Activated CD4-positive, alpha-beta T cell treated with anti-CD3 and anti-CD28 coated beads for 36 hours (primary cell): ENCODE measurements at regions of chr2 and their contacts with region 1.

Region 1: DNA sequence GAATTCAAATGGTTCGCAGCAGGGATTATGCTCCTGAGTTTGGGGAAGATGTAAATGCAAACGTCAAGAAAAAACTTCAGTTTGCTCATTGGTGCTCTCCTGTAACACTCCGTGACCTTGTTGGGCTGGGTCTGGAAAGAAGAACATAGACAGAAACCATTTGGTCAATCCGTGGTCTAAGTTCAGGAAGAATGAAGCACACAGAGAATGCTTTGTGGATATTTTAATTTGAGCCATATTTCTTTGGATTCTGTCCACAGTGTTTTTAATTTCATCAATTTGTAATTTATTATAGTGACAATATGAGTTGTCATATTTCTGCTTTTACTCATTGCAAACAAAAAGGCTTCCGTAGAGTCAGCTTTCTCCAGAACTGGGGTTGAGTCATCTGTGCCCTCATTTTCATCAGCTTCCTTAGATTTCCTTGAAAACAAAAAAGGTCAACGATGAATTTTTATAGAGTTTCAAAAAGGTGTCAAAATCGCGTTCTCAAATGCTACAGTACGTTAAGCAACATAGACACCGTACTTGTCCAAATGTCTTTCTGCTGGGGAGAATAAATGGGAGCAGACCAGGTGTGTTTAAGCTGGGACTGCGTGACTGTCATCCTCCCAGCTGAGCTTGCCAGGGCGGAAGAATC is 606.4 kb downstream of the RNF144A start:
- DNase-seq: peak; percentile 27
- ATAC-seq: peak; percentile 51
- H3K4me3 Mint-ChIP-seq: peak overlapping the region; percentile 46
- H3K27ac Mint-ChIP-seq: peak overlapping the region; percentile 92
- H3K4me1 Mint-ChIP-seq: peaks cover 57% of the 10 kb centered on the region
- H3K27me3 Mint-ChIP-seq: no peaks in the 10 kb centered on the region

Region 2: GRCh38 chr2:7450188-7450832 is 73.3 kb before region 1 on chr2:
- CTCF ChIA-PET with region 1: no interaction called
- POLR2A ChIA-PET with region 1: no interaction called
- intact Hi-C with region 1: loop called in 1 of 2 experiments (anchors 1 kb)
- DNase-seq: peak; percentile 83
- ATAC-seq: peak; percentile 84
- H3K4me3 Mint-ChIP-seq: peak overlapping the region; percentile 36
- H3K27ac Mint-ChIP-seq: peak overlapping the region; percentile 89
- H3K4me1 Mint-ChIP-seq: peaks cover 74% of the 10 kb centered on the region
- H3K27me3 Mint-ChIP-seq: no peaks in the 10 kb centered on the region

Region 3: DNA sequence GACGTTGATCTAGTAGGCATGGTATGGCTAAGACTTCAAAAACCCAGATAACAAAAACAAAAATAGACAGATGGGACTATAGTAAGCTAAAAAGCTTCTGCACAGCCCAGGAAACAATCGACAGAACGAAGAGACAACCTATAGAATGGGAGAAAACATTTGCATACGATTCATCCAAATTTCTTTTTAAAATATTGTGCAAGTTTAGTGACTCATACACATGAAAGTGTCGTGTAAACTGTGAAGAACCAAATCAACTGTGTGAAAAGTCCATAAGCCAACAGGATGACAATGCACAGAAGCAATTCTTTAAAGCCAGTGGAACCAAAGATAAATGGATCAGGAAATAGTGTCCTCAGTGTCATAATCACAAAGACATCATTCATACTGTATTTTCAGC is 64.7 kb after region 1 on chr2:
- CTCF ChIA-PET with region 1: no interaction called
- POLR2A ChIA-PET with region 1: no interaction called
- intact Hi-C with region 1: loop called in 1 of 2 experiments (anchors 2 kb)
- DNase-seq: no peak
- ATAC-seq: peak; percentile 71
- H3K4me3 Mint-ChIP-seq: no peak overlapping the region
- H3K27ac Mint-ChIP-seq: peak overlapping the region; percentile 71
- H3K4me1 Mint-ChIP-seq: peaks cover 41% of the 10 kb centered on the region
- H3K27me3 Mint-ChIP-seq: no peaks in the 10 kb centered on the region

Region 4: DNA sequence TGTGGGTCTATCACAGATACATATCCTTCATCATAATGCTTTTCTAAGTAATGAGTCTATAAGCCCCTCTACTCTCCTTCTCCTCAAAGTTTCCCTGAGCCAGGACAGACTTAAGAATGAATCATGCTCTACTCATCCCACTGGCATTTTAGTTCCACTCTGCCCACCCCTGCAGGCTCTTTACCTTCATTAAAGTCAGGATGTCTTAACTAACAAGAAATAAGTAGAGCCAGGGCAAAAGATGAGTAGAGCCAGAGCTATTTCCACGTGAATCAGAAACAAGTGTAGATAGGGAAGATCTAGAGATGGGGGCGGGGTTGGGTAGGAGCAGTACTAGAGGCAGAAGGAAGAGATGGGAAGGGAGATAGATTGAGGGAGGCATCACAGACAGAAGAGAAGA is 184.1 kb after region 1 on chr2:
- CTCF ChIA-PET with region 1: no interaction called
- POLR2A ChIA-PET with region 1: no interaction called
- intact Hi-C with region 1: no loop called
- DNase-seq: no peak
- ATAC-seq: no peak
- H3K4me3 Mint-ChIP-seq: no peak overlapping the region
- H3K27ac Mint-ChIP-seq: no peak overlapping the region
- H3K4me1 Mint-ChIP-seq: peaks cover 9% of the 10 kb centered on the region
- H3K27me3 Mint-ChIP-seq: no peaks in the 10 kb centered on the region